ENCODE measurements at regions of chr20 and their contacts with region 1.

Region 1: GRCh38 chr20:49982346-49983122 is at the start of gene SNAI1:
- DNase-seq: peak; percentile 83
- ATAC-seq: peak; percentile 91
- total RNA-seq, gene SNAI1: 0.81 TPM

Region 2: DNA sequence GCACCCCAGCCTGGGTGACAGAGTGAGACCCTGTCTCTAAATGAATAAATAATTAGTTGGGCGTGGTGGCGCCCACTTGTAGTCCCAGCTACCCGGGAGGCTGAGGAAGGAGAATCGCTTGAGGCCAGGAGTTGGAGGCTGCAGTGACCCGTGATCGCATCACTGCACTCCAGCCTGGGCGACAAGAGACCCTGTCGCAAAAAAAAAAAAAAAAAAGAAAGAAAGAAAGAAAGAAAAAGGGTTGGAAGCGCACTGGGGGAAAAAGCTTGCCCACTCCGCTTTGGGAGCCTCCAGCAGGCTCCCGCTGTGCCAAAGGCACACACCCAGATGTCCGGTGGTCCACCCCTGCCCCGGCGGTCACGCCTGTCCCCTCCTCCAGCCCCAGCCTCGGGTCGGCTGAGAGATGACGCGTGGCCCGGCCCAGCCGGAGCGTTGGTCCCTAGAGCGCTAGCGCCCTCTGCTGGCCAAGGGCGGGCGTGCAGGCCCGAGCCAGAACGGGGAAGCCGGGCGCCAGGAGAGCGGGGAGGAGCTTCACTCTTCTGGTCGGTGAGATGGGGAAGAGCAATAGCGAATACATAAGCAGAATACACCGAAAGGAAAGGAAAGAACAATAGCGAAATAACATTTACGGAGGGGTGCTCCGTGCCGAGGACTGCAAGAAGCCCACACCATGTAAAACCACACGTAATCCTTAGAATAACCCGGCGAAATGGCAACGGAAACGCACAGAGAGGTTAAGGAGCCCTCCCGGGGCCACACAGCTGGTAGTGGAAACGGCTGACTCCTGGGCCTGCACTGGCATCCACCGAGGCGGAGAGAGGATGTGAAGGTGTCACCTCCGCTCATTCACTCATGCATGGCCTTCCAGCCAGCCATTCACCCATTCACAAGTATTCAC is 88.7 kb after region 1 on chr20:
- intact Hi-C with region 1: loop called (anchors 2 kb)
- DNase-seq: peak; percentile 95
- ATAC-seq: peak; percentile 95

Region 3: DNA sequence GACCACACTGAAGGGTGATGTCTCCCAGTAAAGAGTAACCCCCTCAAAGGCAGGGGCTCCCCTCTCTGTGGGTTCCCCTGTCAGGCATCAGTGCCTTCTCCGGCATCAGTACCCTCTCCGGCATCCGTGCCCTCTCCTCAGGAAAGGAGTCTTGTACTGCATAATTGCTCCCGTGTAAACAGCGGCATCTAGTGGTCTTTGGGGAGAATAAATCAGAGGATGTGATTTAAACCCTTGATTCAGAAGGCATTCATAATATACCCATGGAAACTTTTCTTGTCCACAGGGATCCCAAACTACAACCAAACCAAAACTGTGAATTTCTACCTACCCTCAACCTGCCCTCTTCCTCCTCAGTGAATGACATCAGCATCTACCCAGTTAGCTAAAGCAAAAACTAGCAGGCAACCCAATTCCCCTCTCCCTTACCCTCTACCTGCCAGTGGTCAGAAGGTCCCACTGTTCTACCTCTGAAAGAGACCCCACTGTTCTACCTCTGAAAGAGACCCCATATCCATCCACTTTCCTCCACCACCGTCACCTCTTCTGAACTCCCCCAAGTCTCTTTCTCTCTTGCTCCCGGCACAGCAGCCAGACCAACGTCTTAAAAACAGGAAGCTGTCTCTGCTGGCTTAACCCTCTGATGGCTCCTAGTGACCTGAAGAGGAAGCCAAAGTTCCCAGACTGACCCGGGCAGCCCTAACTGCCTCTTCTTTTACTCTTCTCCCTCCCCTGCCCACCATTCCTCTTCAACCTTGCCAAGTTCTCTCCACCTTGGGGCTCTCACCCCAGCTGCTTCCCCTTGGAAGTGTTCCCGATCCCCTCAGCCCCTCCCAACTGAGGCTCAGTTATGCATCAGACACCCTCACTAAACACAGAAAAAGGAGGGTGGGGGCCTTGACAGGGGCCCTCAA is 103.2 kb after region 1 on chr20:
- intact Hi-C with region 1: loop called (anchors 5 kb)
- DNase-seq: peak; percentile 40
- ATAC-seq: peak; percentile 76

Region 4: GRCh38 chr20:50179507-50180016 is 197.0 kb after region 1 on chr20:
- intact Hi-C with region 1: loop called (anchors 5 kb)
- DNase-seq: peak; percentile 11
- ATAC-seq: peak; percentile 36

Measured in Right ventricle myocardium superior (tissue), 1 donor.